ENCODE measurements at regions of chr6 and their contacts with region 1.

Region 1: DNA sequence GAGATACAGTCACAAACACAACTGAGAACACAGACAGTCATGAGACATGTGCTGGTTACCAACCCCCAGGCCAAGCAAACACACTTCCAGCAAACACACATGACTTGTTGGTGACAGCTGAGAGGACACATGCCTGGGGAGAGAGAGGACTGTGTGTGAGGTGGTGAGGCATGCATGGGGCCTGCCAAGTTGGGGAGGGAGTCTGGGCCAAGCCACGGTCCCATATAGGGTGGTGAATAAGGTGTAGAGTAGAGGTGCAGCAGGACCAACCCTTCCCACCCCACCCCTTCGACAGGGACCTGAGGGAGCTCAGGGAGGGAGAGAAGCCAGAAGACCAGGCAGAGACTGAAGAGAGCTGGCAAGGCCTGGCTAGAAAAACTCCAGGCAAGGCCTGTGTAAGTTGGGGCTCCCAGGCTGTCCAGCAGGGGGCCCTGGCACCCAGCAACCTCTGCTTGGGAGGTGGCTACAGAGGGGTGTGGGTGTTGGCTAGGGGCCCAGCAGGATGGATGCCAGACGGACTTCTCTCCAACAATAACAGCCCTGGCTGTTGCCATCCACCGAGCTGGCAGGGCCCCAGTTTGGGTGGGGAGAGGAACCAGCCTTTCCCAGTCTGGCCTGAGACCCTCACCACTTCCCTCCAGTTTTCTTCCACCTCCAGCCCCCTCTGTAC is 2.0 kb upstream of the SLC29A1 start:
- DNase-seq: peak; percentile 93 to 95 (median 95)
- ATAC-seq: peak; percentile 63 to 78 (median 73)
- H3K4me3 ChIP-seq: peak overlapping the region in 9 of 12 donors; percentile 9 to 88 (median 71)
- H3K27ac ChIP-seq: peak overlapping the region; percentile 54 to 99 (median 92)
- H3K4me1 ChIP-seq: peaks cover 9 to 95% (median 85%) of the 10 kb centered on the region in 12 donors
- H3K27me3 ChIP-seq: no peaks in the 10 kb centered on the region
- CTCF ChIP-seq: peak; percentile 71 to 95 (median 82)
- POLR2A ChIP-seq: peak in 1 of 2 donors; percentile 15

Region 2: DNA sequence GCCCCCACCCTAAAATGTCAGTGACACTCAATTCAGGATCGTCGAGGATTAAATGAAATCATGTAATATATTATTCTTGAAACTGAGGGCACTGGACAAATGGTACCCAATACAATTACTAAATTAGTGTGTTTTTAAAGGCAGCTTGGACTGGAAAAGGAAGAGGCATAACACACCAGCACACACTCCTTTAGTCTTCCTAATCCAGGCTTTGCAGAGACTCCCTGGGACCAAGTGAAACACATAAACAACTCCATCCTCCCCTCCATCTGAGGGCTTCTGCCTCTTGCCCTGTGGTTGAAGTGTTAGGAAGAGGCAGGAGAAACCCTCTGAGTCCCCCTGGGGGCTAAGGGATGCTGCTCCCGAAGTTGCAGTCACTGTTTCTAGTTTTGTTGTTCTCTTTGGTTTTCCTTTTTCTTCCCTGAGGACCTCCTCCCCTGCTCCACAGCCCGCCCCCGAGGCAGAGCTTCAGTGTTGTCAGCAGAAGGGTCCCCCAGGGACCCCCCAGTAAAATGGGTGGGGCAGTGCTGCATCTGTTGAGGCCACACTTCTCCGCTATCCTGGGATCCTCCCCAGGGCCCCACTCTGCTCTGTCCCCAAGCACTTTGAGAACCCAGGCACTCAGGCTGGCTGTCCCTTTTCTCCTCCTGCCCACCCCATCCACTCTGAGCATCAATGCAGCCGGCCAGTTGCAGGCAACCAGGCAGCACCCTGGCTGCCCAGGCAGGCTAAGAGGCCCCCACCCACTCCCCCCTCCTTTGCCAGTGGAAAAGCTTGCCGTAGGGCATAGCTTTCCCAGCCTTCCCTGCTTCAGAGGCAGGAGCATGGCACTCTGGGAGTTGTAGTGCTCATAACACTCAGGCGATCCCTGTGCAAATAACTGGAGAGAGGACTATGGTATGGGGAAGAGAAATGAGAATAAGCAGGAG is 88.2 kb before region 1 on chr6:
- intact Hi-C with region 1: no loop called
- DNase-seq: peak in 4 of 5 donors; percentile 48 to 70 (median 64)
- ATAC-seq: peak; percentile 77 to 89 (median 84)
- H3K4me3 ChIP-seq: peak overlapping the region in 6 of 12 donors; percentile 4 to 41 (median 28)
- H3K27ac ChIP-seq: peak overlapping the region in 8 of 12 donors; percentile 6 to 58 (median 38)
- H3K4me1 ChIP-seq: peaks cover 0 to 41% (median 12%) of the 10 kb centered on the region in 12 donors
- H3K27me3 ChIP-seq: no peaks in the 10 kb centered on the region
- CTCF ChIP-seq: no peak
- POLR2A ChIP-seq: no peak

Region 3: DNA sequence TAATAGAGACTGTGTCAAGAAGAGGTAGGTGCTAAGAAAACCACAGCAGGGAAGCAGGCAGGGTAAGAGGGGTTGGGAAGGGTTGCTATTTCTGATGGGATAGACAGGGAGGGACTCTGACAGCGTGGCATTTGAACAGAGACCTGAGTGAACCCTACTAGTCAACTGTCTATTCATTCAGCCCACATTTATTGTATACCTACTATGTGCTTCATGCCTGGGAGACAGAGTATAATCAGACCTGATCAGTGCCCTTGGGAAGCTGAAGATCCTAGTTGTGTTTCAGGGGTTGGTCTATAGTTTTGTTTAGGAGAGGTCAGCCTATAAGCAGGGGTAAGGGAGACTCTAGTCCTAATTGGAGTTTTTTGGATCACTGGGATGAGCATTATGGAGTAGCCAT is 77.7 kb before region 1 on chr6:
- intact Hi-C with region 1: no loop called
- DNase-seq: no peak
- ATAC-seq: no peak
- H3K4me3 ChIP-seq: no peak overlapping the region
- H3K27ac ChIP-seq: no peak overlapping the region
- H3K4me1 ChIP-seq: no peaks in the 10 kb centered on the region
- H3K27me3 ChIP-seq: no peaks in the 10 kb centered on the region
- CTCF ChIP-seq: no peak
- POLR2A ChIP-seq: no peak

Region 4: DNA sequence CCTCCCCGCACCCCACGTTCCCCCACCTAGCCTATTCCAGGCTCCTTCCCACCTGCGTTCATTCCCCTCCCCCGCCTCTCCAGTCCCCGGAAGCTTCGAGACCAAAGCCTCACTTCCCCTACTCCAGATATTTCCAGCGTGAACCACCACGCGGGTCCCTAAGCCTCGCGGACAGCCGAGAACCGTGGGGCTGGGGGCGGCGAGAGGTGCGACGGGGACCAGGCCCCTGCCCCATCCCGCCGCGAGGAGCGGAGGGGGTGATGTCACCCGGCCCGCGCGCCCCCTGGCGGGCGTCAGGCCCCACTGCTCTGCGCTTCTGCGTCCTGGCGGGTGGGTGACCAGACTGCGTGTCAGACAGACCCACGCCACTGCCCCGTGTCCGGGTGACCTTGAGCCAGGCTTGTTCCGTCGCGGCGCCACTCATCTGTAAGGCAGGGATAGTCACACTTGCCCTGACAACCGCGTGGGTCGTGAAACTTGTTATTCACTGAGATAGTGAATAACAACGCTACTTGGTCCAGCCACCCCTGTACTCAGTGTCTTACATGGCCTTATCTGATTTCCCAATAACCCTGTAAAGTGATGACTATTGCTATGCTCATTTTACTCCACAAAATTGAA is 16.5 kb after region 1 on chr6:
- intact Hi-C with region 1: loop called in 2 of 10 experiments (anchors 1 kb)
- DNase-seq: peak; percentile 80 to 91 (median 83)
- ATAC-seq: peak; percentile 30 to 81 (median 74)
- H3K4me3 ChIP-seq: peak overlapping the region; percentile 32 to 75 (median 62)
- H3K27ac ChIP-seq: peak overlapping the region; percentile 87 to 99 (median 95)
- H3K4me1 ChIP-seq: peaks cover 3 to 52% (median 39%) of the 10 kb centered on the region in 12 donors
- H3K27me3 ChIP-seq: no peaks in the 10 kb centered on the region
- CTCF ChIP-seq: peak; percentile 95 to 100 (median 98)
- POLR2A ChIP-seq: peak in 1 of 2 donors; percentile 29

Region 5: GRCh38 chr6:44246663-44247337 is 25.4 kb after region 1 on chr6 and contains the start of gene HSP90AB1:
- intact Hi-C with region 1: loop called in 1 of 10 experiments (anchors 1 kb)
- DNase-seq: peak; percentile 94 to 97 (median 95)
- ATAC-seq: peak; percentile 83 to 88 (median 86)
- H3K4me3 ChIP-seq: peak within 1 kb of the TSS; percentile 69 to 98 (median 81)
- H3K27ac ChIP-seq: peak within 1 kb of the TSS; percentile 90 to 100 (median 98)
- H3K4me1 ChIP-seq: peaks cover 0 to 45% (median 37%) of the 10 kb centered on the region in 12 donors
- H3K27me3 ChIP-seq: no peaks in the 10 kb centered on the region
- CTCF ChIP-seq: no peak
- POLR2A ChIP-seq: peak; percentile 81 to 95
- total RNA-seq, gene HSP90AB1: 725 to 1,040 (median 857) TPM

Measured in heart left ventricle (tissue), 16 donors.